Heart left ventricle (tissue), 16 donors: ENCODE measurements at regions of chr12 and their contacts with region 1.

Region 1: DNA sequence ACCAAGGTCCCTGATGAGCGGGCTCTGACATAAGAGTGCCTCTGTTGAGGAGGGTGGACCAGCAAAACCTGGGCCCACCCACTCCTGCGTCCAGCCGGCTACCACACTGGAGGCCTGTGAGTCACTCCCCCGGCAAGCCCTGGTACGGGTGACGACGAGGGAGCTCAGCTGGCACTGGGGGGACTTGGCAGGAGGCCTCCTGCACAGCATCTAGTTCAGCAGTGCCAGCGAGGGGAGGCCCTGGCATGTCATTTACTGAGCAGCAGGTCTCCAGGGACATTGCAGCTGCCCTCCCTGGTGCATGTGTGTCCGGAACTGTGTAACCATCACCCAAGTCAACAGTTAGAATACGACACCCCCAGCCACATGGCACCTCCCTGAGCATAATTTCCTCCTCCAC is 24.4 kb downstream of the CD9 start:
- DNase-seq: peak in 2 of 5 donors; percentile 60 to 66
- ATAC-seq: peak in 1 of 4 donors; percentile 4
- H3K4me3 ChIP-seq: no peak overlapping the region
- H3K27ac ChIP-seq: peak overlapping the region; percentile 67 to 96 (median 88)
- H3K4me1 ChIP-seq: peaks cover 21 to 100% (median 91%) of the 10 kb centered on the region in 12 donors
- H3K27me3 ChIP-seq: no peaks in the 10 kb centered on the region
- CTCF ChIP-seq: no peak
- POLR2A ChIP-seq: no peak

Region 2: GRCh38 chr12:6205144-6205539 is 19.4 kb before region 1 on chr12:
- intact Hi-C with region 1: loop called in 3 of 10 experiments (anchors 2 kb)
- DNase-seq: peak in 4 of 5 donors; percentile 71 to 82 (median 80)
- ATAC-seq: peak; percentile 57 to 70 (median 64)
- H3K4me3 ChIP-seq: peak overlapping the region in 8 of 12 donors; percentile 5 to 98 (median 86)
- H3K27ac ChIP-seq: peak overlapping the region; percentile 54 to 99 (median 94)
- H3K4me1 ChIP-seq: peaks cover 7 to 88% (median 71%) of the 10 kb centered on the region in 12 donors
- H3K27me3 ChIP-seq: peaks cover 0 to 20% (median 0%) of the 10 kb centered on the region in 9 donors
- CTCF ChIP-seq: no peak
- POLR2A ChIP-seq: no peak

Region 3: GRCh38 chr12:6268484-6269157 is 44.1 kb after region 1 on chr12:
- intact Hi-C with region 1: no loop called
- DNase-seq: peak in 1 of 5 donors; percentile 31
- ATAC-seq: peak in 2 of 4 donors; percentile 25 to 28
- H3K4me3 ChIP-seq: no peak overlapping the region
- H3K27ac ChIP-seq: no peak overlapping the region
- H3K4me1 ChIP-seq: peaks cover 0 to 13% (median 4%) of the 10 kb centered on the region in 12 donors
- H3K27me3 ChIP-seq: no peaks in the 10 kb centered on the region
- CTCF ChIP-seq: no peak
- POLR2A ChIP-seq: no peak